OCI-LY7 (cell line): ENCODE measurements at regions of chr2 and their contacts with region 1.

Region 1: DNA sequence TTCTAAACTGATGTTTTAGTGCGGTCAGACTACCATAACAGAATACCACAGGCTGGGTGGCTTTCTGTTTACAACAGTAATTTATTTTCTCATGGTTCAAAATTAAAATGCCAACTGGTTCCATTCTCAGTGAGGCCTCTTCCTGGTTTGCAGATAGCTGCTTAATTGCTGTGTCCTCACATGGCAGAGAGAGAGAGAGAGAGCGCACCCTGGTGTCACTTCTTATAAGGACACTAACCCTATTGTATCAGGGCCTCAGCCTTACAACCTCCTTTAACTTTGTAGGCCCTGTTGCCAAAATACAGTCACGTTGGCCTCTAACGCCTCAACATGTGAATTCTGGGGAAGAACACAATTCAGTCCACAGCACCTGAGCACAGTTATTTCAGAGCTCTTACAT is 37.5 kb upstream of the ZNF385B start:
- DNase-seq: peak; percentile 92
- H3K4me3 ChIP-seq: no peak overlapping the region
- H3K27ac ChIP-seq: peak overlapping the region; percentile 45
- H3K4me1 ChIP-seq: peaks cover 18% of the 10 kb centered on the region
- CTCF ChIP-seq: peak; percentile 94

Region 2: DNA sequence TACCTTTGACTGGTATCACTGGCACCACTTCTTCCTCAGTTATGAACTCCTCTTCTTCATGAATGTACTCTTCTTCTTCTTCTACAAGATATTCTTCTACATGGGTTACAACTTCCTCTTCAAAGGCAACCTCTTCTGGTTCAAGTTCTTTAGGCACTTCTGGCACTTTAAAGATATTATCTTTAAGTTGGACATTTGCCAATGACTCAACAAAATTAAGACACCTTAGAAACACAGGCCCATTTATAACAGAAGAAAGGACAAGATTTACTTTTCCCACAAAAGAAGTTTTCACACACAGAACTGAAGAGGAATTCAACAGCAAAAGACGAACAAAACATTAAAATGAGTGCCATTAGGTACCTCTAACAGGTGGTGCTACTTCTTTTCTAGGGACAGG is 1219.0 kb before region 1 on chr2:
- CTCF ChIA-PET with region 1: no interaction called
- POLR2A ChIA-PET with region 1: no interaction called
- intact Hi-C with region 1: no loop called
- DNase-seq: no peak
- H3K4me3 ChIP-seq: no peak overlapping the region
- H3K27ac ChIP-seq: no peak overlapping the region
- H3K4me1 ChIP-seq: no peaks in the 10 kb centered on the region
- CTCF ChIP-seq: no peak

Region 3: GRCh38 chr2:179842498-179843153 is 56.2 kb before region 1 on chr2:
- CTCF ChIA-PET with region 1: interaction called, 7 read pairs
- POLR2A ChIA-PET with region 1: interaction called, 5 read pairs
- intact Hi-C with region 1: loop called (anchors 1 kb)
- DNase-seq: peak; percentile 77
- H3K4me3 ChIP-seq: peak overlapping the region; percentile 1
- H3K27ac ChIP-seq: peak overlapping the region; percentile 28
- H3K4me1 ChIP-seq: peaks cover 48% of the 10 kb centered on the region
- CTCF ChIP-seq: peak; percentile 94

Region 4: DNA sequence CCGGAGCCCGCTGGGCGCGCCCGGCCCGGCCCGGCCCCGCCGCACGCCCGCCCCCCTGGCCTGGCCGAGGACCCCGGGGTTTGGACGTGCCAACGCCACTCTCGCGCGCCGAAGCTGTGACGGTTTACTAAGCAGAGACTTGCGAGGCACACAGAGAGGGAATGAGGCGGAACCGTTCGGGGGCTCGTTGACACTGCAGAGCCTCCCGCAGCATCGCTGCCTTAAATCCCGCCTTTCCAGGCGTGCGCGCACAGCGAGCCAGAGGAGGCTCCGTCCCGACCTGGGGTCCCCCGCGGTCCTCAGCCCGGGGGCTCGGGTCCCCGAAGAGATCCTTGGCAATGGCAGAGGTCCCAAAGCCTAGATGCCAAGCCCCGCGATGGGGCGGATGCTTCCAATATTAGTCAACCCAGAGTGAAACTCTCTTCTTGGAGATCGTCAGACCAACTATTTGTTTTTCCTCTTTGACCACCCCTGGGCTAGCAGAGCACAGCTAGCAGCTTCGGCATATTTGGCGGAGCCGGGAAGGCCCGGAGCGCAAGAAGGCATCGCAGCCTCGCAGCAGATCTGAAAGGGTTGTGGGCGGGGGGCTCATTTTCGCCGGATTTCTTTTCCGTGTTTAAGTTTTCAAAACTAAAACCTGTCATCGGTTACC is 37.3 kb before region 1 on chr2 and contains the start of gene ZNF385B:
- CTCF ChIA-PET with region 1: interaction called, 3 read pairs
- POLR2A ChIA-PET with region 1: interaction called, 18 read pairs
- intact Hi-C with region 1: loop called (anchors 1 kb)
- DNase-seq: peak; percentile 83
- H3K4me3 ChIP-seq: peak within 1 kb of the TSS; percentile 90
- H3K27ac ChIP-seq: peak within 1 kb of the TSS; percentile 83
- H3K4me1 ChIP-seq: peaks cover 63% of the 10 kb centered on the region
- CTCF ChIP-seq: no peak
- total RNA-seq, gene ZNF385B: 113 and 195 TPM in 2 replicates

Region 5: DNA sequence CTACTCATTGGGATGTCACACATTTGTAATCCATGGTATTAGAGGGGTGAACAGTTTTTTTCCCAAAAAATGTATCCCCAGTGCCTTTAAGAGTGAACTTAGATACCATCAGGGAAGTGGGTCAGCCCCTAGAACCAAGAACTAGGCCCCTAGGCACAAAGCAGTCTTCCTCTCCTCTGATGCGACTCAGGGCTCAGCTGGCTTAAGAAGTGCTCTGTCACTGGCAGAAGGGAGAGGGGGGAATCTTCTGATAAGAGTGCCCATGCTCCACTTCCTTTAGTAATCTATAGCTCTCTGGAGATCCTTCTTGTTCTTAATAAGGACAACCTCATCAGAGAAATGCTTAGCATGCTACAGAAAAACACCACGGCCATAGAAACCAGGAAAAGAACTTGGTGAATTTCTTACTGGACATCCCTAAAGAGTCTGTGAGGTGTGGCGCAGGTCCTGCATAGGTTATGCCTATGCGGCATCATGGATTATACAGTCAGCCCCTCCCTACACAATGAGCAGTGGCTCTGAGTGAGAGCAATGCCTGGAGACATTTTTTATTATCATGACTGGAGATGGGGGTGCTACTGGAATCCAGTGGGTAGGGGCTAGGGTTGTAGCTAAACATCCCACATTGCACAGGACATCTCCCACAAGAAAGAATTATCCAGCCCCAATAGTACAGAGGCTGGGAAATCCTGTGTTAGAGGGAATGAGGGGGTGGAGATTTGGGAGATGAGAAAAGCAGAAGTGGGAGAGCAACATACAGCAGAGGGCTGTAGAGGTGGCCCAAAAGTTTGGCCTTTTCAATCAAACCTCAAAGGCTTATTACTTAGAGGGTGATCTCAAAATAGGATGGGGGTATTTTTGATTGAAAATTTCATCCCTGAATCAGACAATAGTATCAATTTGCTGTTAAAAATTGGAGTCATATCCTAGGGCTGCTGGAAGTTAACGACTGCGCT is 15.7 kb before region 1 on chr2:
- CTCF ChIA-PET with region 1: interaction called, 7 read pairs
- POLR2A ChIA-PET with region 1: interaction called, 21 read pairs
- intact Hi-C with region 1: no loop called
- DNase-seq: peak; percentile 56
- H3K4me3 ChIP-seq: peak overlapping the region; percentile 66
- H3K27ac ChIP-seq: peak overlapping the region; percentile 100
- H3K4me1 ChIP-seq: peaks cover 76% of the 10 kb centered on the region
- CTCF ChIP-seq: no peak

Region 6: DNA sequence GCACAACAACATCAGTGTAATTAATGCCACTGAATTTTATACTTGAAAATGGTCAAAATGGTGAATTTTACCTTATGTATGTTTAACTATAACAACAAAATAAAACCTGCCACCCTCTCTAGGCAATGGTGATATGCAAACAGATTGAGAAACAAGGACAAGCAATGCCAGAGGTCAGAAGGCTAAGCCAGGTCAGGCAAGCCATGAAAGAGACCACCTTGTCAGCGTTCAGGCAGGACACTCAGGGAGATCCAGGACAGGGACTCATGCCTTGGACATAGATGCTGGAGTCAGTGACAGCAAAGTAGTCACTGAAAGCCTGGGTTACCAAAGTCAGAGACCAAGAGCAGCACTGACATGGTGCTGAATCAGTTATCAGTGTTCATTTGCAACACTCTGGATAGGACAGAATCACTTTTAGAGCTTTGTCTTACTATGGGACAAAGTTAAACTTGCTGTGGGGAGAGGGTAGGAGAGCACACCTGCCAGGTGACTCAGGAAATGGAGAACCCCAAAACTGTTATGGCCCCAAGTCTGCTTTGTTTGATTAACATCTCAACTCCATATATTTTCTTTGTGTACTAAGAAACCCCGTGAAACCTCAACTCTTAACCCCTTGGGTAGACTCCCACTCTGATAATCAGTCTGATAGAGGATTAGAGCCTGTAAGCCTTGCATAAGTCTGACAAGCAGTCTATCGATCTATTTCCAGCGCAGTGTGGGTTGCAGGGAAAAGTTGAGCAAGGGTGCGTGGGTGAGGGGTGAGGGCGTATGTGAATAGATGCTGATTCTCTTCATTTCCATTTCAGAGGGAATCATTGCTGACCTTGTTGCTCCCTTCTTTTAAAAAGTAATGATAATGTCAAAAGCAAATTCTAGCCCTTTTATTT is 11.2 kb after region 1 on chr2:
- CTCF ChIA-PET with region 1: no interaction called
- POLR2A ChIA-PET with region 1: no interaction called
- intact Hi-C with region 1: no loop called
- DNase-seq: no peak
- H3K4me3 ChIP-seq: no peak overlapping the region
- H3K27ac ChIP-seq: no peak overlapping the region
- H3K4me1 ChIP-seq: no peaks in the 10 kb centered on the region
- CTCF ChIP-seq: no peak

Region 7: GRCh38 chr2:180101846-180102245 is 203.0 kb after region 1 on chr2:
- CTCF ChIA-PET with region 1: no interaction called
- POLR2A ChIA-PET with region 1: no interaction called
- intact Hi-C with region 1: no loop called
- DNase-seq: no peak
- H3K4me3 ChIP-seq: no peak overlapping the region
- H3K27ac ChIP-seq: no peak overlapping the region
- H3K4me1 ChIP-seq: no peaks in the 10 kb centered on the region
- CTCF ChIP-seq: no peak